CD14-positive monocyte (primary cell): ENCODE measurements at regions of chr1 and their contacts with region 1.

Region 1: DNA sequence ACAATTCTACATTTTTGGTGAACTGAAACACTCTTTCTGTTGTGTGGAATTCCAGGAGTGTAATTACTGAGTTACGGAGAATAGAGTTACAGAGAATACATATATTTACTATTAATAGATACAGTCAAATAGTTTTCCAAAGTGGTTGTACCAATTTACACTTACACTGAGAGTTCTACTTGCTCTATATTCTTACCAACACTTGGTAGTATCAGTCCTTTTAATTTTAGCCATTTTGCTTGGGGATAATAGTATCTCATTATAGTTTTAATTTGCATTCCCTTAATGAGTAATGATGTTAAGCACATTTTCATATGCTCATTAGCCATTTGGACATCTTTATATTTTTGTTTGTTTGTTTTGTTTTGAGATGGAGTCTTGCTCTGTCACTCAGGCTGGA is 28.9 kb downstream of the AGO4 start:
- DNase-seq: no peak
- H3K4me3 ChIP-seq: no peak overlapping the region
- H3K4me3 Mint-ChIP-seq: no peak overlapping the region
- H3K27ac ChIP-seq: peak overlapping the region in 1 of 2 donors; percentile 72
- H3K27ac Mint-ChIP-seq: peak overlapping the region in 2 of 7 donors; percentile 40 to 75
- H3K4me1 ChIP-seq: peaks cover 20 to 22% of the 10 kb centered on the region in 2 donors
- H3K4me1 Mint-ChIP-seq: peaks cover 21% of the 10 kb centered on the region
- H3K27me3 ChIP-seq: no peaks in the 10 kb centered on the region
- H3K27me3 Mint-ChIP-seq: no peaks in the 10 kb centered on the region
- CTCF ChIP-seq: no peak

Region 2: GRCh38 chr1:35807614-35808449 is 28.9 kb before region 1 on chr1 and contains the start of gene AGO4:
- intact Hi-C with region 1: loop called in 1 of 2 experiments (anchors 2 kb)
- DNase-seq: peak; percentile 23 to 27 (median 26)
- H3K4me3 ChIP-seq: peak within 1 kb of the TSS; percentile 85 to 96 (median 87)
- H3K4me3 Mint-ChIP-seq: peak within 1 kb of the TSS; percentile 93 to 99
- H3K27ac ChIP-seq: peak within 1 kb of the TSS; percentile 92 to 94
- H3K27ac Mint-ChIP-seq: peak within 1 kb of the TSS; percentile 92 to 100 (median 96)
- H3K4me1 ChIP-seq: peaks cover 74 to 89% of the 10 kb centered on the region in 2 donors
- H3K4me1 Mint-ChIP-seq: peaks cover 80% of the 10 kb centered on the region
- H3K27me3 ChIP-seq: no peaks in the 10 kb centered on the region
- H3K27me3 Mint-ChIP-seq: peaks cover 0 to under 1% (median 0%) of the 10 kb centered on the region in 3 donors
- CTCF ChIP-seq: no peak
- polyA plus RNA-seq, gene AGO4: 20.0 to 46.9 (median 24.0) TPM